ENCODE measurements at regions of chr4 and their contacts with region 1.

Region 1: GRCh38 chr4:139266583-139267257 is 13.3 kb downstream of the MGARP start:
- DNase-seq: peak; percentile 92
- ATAC-seq: peak; percentile 97
- H3K4me3 Mint-ChIP-seq: peak overlapping the region; percentile 25
- H3K27ac Mint-ChIP-seq: peak overlapping the region; percentile 81
- H3K4me1 Mint-ChIP-seq: peaks cover 27% of the 10 kb centered on the region
- H3K27me3 Mint-ChIP-seq: no peaks in the 10 kb centered on the region

Region 2: DNA sequence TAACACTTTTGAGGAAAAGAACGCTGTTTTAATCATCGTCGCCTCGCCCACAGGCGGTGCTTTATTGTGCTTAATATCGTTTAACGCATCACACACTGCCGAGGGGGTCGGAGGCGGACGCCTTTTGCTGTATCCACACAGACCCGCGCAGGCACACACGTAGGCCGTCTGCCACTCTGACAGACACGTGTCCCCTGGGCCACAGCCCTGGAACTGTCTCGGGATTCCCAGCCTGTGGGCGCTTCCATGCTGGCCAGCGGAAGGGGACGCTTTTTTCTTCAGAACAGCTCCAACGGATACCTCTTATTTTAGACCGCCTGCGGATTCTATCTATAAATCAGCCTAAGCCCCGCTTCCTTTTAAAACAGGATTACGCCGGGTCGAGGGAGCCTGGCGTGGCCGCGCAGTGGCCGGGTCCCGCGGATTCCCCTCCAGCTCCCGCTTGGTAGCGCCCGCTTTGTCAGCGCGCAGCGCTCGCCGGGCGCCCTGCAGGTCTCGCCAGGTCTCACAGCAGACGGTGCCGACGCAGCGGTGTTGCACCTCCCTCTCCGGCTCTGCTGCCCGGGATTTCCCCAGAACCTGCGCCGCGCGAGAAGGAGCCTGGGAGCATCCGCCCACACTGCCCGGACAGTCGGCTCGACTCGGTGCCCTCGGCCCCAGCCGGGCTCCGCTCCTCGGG is 251.3 kb before region 1 on chr4 and contains the start of gene NOCT:
- CTCF ChIA-PET with region 1: interaction called, 3 read pairs
- POLR2A ChIA-PET with region 1: no interaction called
- intact Hi-C with region 1: loop called in 1 of 2 experiments (anchors 1 kb)
- DNase-seq: peak; percentile 98
- ATAC-seq: peak; percentile 92
- H3K4me3 Mint-ChIP-seq: peak within 1 kb of the TSS; percentile 90
- H3K27ac Mint-ChIP-seq: peak within 1 kb of the TSS; percentile 96
- H3K4me1 Mint-ChIP-seq: peaks cover 41% of the 10 kb centered on the region
- H3K27me3 Mint-ChIP-seq: no peaks in the 10 kb centered on the region
- total RNA-seq, gene NOCT: 16.5 to 20.5 TPM

Region 3: GRCh38 chr4:139223682-139224317 is 42.9 kb before region 1 on chr4:
- CTCF ChIA-PET with region 1: no interaction called
- POLR2A ChIA-PET with region 1: no interaction called
- intact Hi-C with region 1: loop called (anchors 1 to 2 kb)
- DNase-seq: peak; percentile 58
- ATAC-seq: peak; percentile 88
- H3K4me3 Mint-ChIP-seq: no peak overlapping the region
- H3K27ac Mint-ChIP-seq: no peak overlapping the region
- H3K4me1 Mint-ChIP-seq: peaks cover 17% of the 10 kb centered on the region
- H3K27me3 Mint-ChIP-seq: no peaks in the 10 kb centered on the region

Region 4: DNA sequence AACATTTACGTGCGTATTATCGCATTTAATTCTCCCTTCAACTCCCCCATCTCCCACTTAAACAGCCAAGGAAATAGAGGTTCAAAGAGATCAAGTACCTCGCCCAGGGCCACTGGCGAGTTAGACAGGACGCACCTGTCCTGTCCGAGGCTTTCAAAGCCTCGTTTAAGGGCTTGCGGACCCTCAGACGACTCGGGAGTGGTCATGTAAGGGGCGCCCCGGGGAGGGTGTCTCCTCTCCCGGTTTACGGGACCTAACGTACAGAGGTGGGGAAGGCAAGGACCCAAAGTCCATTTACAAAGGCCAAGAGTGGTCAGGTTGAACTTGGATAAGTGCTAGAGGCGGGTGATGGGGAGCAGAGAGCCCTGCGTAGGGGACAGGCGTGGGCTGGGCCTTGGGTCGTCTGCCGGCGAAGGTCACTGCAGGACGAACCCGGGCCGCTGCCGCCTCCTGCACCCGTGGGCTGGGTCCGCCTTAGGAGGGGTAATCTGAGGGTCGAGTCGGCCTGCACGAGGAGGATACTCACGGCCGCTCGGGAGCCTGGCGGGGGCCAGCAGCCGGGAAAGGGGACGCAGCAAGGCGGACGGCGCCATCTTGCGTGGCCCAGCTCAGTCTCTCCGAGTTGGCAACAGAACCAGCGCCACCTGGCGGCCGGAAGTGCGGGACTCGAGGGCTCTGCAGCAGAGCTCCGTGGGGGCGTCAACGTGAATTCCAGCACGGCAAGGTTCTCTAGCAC is 28.7 kb after region 1 on chr4:
- CTCF ChIA-PET with region 1: interaction called, 10 read pairs
- POLR2A ChIA-PET with region 1: interaction called, 12 read pairs
- intact Hi-C with region 1: loop called (anchors 1 kb)
- DNase-seq: peak; percentile 99
- ATAC-seq: peak; percentile 89
- H3K4me3 Mint-ChIP-seq: peak overlapping the region; percentile 95
- H3K27ac Mint-ChIP-seq: peak overlapping the region; percentile 96
- H3K4me1 Mint-ChIP-seq: peaks cover 38% of the 10 kb centered on the region
- H3K27me3 Mint-ChIP-seq: no peaks in the 10 kb centered on the region

Region 5: GRCh38 chr4:139331185-139331584 is 64.5 kb after region 1 on chr4:
- CTCF ChIA-PET with region 1: interaction called, 6 read pairs
- POLR2A ChIA-PET with region 1: no interaction called
- intact Hi-C with region 1: loop called in 1 of 2 experiments (anchors 2 kb)
- DNase-seq: no peak
- ATAC-seq: no peak
- H3K4me3 Mint-ChIP-seq: no peak overlapping the region
- H3K27ac Mint-ChIP-seq: peak overlapping the region; percentile 69
- H3K4me1 Mint-ChIP-seq: peaks cover 48% of the 10 kb centered on the region
- H3K27me3 Mint-ChIP-seq: no peaks in the 10 kb centered on the region

Measured in activated CD4-positive, alpha-beta T cell treated with anti-CD3 and anti-CD28 coated beads for 36 hours (primary cell).